SK-N-SH (cell line): ENCODE measurements at regions of chr3 and their contacts with region 1.

Region 1: DNA sequence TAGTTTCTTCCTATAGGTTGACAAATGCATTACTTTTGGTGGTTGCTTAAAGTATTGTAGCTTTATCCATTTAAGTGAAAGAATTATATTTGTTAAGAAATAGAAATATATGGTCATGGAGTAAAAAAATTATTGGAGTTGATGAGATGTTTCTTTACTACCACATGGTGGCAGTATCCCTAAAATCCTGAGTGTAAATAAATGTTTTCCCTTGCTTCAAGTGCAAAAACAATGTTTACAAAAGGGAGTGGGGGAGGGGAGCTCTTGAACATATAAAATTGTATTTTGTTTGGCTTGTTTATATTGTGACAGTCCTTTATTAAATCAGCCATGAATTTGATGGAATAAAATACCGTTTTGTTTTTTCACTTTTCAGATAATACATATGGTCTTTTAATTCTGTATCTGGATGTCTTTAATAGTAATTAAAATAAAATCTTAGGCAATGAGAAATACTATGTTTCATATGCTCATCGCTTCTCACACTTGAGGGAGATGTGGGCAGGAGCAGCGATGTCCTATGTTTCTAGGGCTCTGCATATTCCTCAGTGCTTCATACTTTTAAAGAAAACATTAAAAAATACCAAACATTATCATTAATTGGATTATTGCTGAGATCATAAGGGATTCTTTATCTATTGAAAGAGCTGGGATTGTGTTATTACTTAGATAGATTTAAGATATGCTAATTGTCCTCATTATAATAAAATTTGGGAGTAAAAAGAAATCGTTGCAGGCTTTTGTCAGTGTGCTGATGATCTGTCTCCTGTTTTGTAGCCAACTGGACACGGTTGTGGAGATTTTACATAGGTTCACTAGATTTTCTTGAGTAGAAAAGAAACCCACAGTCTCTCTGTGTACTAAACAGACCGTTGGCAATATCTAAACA is 349.7 kb downstream of the TUSC7 start:
- DNase-seq: peak; percentile 37
- H3K4me3 ChIP-seq: no peak overlapping the region
- H3K27ac ChIP-seq: peak overlapping the region in 1 of 2 experiments; percentile 78; a peak in 2 of 4 replicates
- H3K4me1 ChIP-seq: peaks cover 0 to 9% of the 10 kb centered on the region in 2 experiments; a peak in 2 of 4 replicates
- H3K27me3 ChIP-seq: no peaks in the 10 kb centered on the region
- CTCF ChIP-seq: peak; percentile 77
- EP300 ChIP-seq: no peak
- RAD21 ChIP-seq: peak; percentile 70

Region 2: DNA sequence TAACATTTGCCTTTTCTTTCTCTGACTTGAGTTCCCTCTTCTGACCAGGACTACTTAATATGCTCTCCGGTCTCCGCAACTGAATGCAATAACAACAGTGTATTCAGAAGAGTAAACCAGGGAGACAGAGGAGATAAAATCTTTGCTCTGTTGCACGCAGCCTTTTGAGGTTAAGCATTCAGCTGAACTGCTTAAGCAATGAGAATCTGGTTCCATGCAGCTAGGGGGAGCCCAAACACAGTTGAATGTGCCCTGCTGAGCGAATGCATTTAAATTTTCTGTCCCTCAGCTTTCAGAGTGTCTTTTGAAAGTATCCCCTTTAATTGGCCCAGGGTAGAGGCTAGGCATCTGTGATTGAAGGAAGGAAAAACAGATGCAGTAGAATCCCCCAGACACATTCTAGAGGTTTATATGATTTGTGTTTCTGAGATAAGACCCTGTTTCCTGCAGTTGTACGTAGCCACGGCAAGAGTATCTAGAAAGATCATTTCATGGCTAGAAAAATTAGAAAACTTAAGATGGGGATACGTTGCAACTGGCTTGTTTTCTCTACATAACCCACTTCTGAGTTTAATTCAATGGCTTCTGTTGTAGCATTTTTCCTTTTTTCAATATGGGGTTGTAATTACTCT is 40.1 kb before region 1 on chr3:
- CTCF ChIA-PET with region 1: interaction called, 10 read pairs
- POLR2A ChIA-PET with region 1: no interaction called
- DNase-seq: peak; percentile 60
- H3K4me3 ChIP-seq: peak overlapping the region in 1 of 2 experiments; percentile 51; a peak in 2 of 4 replicates
- H3K27ac ChIP-seq: peak overlapping the region in 1 of 2 experiments; percentile 86; a peak in 2 of 4 replicates
- H3K4me1 ChIP-seq: peaks cover 0 to 27% of the 10 kb centered on the region in 2 experiments; a peak in 2 of 4 replicates
- H3K27me3 ChIP-seq: no peaks in the 10 kb centered on the region
- CTCF ChIP-seq: peak; percentile 92
- EP300 ChIP-seq: 0 out of 4 replicates have a peak, but pooled peaks of 1 of the 2 experiments have one; percentile 28
- RAD21 ChIP-seq: peak; percentile 98

Region 3: GRCh38 chr3:117036259-117036799 is 23.0 kb before region 1 on chr3:
- CTCF ChIA-PET with region 1: interaction called, 13 read pairs
- POLR2A ChIA-PET with region 1: no interaction called
- DNase-seq: peak; percentile 43
- H3K4me3 ChIP-seq: peak overlapping the region; percentile 29 to 54; a peak in 3 of 4 replicates
- H3K27ac ChIP-seq: peak overlapping the region; percentile 89 to 92
- H3K4me1 ChIP-seq: peaks cover 13 to 21% of the 10 kb centered on the region in 2 experiments
- H3K27me3 ChIP-seq: no peaks in the 10 kb centered on the region
- CTCF ChIP-seq: no peak
- EP300 ChIP-seq: peak; percentile 35 to 56
- RAD21 ChIP-seq: no peak

Region 4: DNA sequence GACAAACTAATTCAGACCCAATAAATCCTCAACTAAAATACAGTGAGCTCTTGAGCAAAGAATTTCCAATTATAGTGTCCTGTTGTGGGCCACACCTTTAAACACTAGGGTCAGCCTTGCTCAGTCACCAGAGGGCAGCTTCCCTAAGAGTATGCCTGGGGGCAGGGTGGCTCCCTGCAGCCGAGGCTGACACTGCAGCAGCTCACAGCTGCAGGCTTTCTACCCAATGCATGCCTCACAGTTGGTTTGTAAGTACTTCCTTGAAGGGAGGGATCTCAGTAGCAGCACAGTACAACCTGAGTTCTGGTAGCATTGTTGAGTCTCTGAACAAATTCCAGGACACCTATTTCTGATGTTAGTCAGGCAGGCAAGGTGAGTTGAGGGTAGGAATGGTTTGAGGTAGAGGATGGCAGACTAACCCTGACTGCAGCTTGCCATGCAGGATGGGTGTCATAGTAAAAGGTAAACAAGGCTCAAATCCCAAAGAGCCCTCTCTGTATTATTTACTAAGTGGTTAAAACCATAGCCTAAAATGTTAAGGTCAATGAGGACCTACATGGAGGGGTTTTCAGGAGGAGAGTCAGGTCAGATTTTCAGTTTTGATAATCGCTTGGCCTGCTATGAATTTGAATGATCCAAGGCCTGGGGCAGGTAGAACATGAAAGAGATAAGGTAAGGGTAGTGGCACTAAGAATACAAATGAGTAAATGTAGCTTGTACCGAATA is 14.0 kb before region 1 on chr3:
- CTCF ChIA-PET with region 1: interaction called, 13 read pairs
- POLR2A ChIA-PET with region 1: no interaction called
- DNase-seq: no peak
- H3K4me3 ChIP-seq: no peak overlapping the region
- H3K27ac ChIP-seq: no peak overlapping the region
- H3K4me1 ChIP-seq: peaks cover 0 to 5% of the 10 kb centered on the region in 2 experiments; a peak in 1 of 4 replicates
- H3K27me3 ChIP-seq: no peaks in the 10 kb centered on the region
- CTCF ChIP-seq: no peak
- EP300 ChIP-seq: no peak
- RAD21 ChIP-seq: no peak

Region 5: DNA sequence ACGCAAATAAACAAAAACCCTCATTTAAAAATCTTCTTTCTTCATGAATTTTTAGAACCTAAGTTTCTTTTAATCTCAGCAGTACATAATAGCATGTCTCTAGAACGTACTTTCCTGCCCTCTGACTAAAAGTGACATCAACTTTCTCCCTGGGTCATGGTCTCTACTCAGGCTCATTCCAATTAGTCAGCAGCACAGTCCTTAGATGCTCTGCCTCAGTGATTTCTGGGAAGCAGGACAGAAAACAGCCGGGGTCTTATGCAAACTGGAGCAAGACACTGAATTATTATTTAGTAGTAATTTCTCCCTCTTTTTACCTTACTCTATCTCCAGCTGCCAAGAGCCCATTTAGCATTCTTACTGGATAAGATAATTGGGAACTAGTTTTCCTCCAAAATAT is 15.5 kb after region 1 on chr3:
- CTCF ChIA-PET with region 1: interaction called, 13 read pairs
- POLR2A ChIA-PET with region 1: no interaction called
- DNase-seq: no peak
- H3K4me3 ChIP-seq: no peak overlapping the region
- H3K27ac ChIP-seq: no peak overlapping the region
- H3K4me1 ChIP-seq: no peaks in the 10 kb centered on the region
- H3K27me3 ChIP-seq: no peaks in the 10 kb centered on the region
- CTCF ChIP-seq: no peak
- EP300 ChIP-seq: no peak
- RAD21 ChIP-seq: no peak

Region 6: DNA sequence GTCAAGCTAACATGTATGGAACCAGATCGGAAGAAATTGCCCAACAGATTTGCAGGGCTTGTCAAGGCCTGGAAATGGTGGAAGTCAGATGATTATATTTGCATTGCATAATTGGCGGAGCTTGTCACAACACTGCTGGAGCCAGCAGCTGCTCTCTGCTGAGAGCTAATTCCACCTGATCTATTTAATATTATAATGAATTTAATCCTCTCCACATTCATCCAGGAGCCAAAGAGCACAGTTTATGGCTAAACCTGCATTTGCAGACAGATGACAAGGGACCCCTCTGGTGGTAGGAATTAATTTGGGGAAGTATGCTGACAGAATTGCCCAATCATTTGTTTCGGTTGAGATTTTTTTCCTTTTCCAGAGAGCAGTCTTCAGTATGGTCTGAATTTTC is 380.5 kb after region 1 on chr3:
- CTCF ChIA-PET with region 1: interaction called, 11 read pairs
- POLR2A ChIA-PET with region 1: no interaction called
- DNase-seq: peak; percentile 22
- H3K4me3 ChIP-seq: no peak overlapping the region
- H3K27ac ChIP-seq: peak overlapping the region in 1 of 2 experiments; percentile 67; a peak in 2 of 4 replicates
- H3K4me1 ChIP-seq: peaks cover 0 to 7% of the 10 kb centered on the region in 2 experiments; a peak in 2 of 4 replicates
- H3K27me3 ChIP-seq: no peaks in the 10 kb centered on the region
- CTCF ChIP-seq: peak; percentile 56
- EP300 ChIP-seq: no peak
- RAD21 ChIP-seq: peak; percentile 73

Region 7: DNA sequence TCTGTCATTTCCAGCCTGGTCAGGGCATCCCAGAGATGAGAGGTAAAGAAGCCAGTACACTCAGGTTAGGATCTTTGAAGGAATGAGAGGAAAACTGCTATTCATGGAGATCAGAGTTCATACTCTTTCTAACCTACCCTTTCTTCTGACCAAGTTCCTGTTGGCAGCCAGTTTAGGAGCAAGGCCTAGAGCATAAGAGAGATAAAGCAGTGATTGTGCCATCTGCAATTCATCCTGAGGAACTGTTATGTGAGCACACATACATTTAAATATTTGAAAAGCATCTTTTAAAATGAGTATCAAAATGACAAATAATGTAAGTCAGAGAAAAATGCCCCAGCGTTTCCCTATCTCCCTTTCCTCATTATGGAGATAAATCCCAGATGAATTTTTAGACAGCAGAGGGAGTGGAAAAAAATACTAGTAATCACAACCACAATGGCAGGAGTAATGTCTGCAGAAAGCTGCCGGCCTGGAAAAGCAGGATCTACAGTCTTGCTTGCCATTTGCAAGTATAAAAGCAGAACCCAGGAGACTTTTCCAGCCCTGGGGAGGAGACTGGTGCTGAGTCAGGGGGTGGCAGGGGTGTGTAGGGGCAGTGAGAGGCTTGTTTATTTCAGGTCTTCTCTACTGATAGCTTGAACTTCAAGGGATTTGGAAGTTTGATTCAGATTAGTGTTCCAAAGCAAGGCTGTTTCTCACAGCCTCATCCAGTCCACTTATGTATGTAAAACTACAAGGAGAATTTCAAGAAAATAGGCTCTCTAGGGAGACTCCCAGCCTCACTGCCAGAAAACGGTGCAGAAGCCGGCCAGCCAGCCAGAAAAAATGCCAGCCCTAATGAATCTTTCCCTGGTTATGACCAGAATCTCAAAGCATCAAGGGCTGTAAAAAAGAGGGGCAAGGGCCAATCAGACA is 702.7 kb after region 1 on chr3:
- CTCF ChIA-PET with region 1: no interaction called
- POLR2A ChIA-PET with region 1: no interaction called
- DNase-seq: peak; percentile 15
- H3K4me3 ChIP-seq: no peak overlapping the region
- H3K27ac ChIP-seq: peak overlapping the region in 1 of 2 experiments; percentile 93; a peak in 2 of 4 replicates
- H3K4me1 ChIP-seq: peaks cover 0 to 37% of the 10 kb centered on the region in 2 experiments; a peak in 2 of 4 replicates
- H3K27me3 ChIP-seq: no peaks in the 10 kb centered on the region
- CTCF ChIP-seq: no peak
- EP300 ChIP-seq: peak in 1 of 2 experiments; percentile 42; a peak in 2 of 4 replicates
- RAD21 ChIP-seq: peak; percentile 2; the same call in 1 of the 2 replicates